ENCODE measurements at regions of chr5 and their contacts with region 1.

Region 1: DNA sequence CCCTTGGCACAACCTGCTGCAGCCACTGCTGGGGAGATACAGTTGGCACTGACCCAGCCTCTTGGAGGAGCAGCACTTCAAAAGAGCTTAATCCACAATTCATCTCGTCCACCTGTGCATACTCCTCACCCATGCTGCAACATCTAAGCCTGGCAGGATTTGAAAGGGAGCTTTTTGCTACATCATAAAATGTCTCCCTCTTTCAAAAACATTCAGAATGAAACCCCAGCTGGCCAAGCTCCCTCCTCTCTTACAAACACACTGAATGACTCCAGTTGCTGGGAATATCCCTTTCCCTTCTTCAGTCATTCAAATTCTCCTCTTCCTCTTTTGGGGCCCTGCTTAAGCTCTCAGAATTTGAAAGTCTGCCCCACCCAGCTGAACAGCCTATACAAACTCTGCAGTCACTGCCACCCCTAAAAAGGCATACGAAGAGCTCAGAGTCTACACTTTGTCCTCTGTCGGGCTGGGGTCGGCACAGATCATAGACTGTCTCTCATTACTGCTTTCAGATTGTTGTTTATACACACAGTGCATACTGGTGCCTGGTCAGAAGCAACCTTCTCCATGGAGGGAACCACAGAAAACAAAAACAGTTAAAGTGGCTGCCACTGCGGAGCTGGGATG is 8.8 kb upstream of the C5orf15 start:
- DNase-seq: no peak
- H3K4me3 ChIP-seq: no peak overlapping the region
- H3K27ac ChIP-seq: peak overlapping the region; percentile 92
- H3K27me3 ChIP-seq: no peaks in the 10 kb centered on the region
- CTCF ChIP-seq: no peak

Region 2: GRCh38 chr5:133831491-133832224 is 145.6 kb before region 1 on chr5:
- CTCF ChIA-PET with region 1: no interaction called
- POLR2A ChIA-PET with region 1: no interaction called
- DNase-seq: no peak
- H3K4me3 ChIP-seq: no peak overlapping the region
- H3K27ac ChIP-seq: no peak overlapping the region
- H3K27me3 ChIP-seq: peaks cover 6% of the 10 kb centered on the region
- CTCF ChIP-seq: no peak

Region 3: GRCh38 chr5:133993231-133993949 is 16.1 kb after region 1 on chr5:
- CTCF ChIA-PET with region 1: interaction called, 38 read pairs
- POLR2A ChIA-PET with region 1: no interaction called
- DNase-seq: no peak
- H3K4me3 ChIP-seq: no peak overlapping the region
- H3K27ac ChIP-seq: no peak overlapping the region
- H3K27me3 ChIP-seq: no peaks in the 10 kb centered on the region
- CTCF ChIP-seq: no peak

Region 4: GRCh38 chr5:134004592-134005375 is 27.5 kb after region 1 on chr5 and contains the start of gene VDAC1:
- CTCF ChIA-PET with region 1: interaction called, 16 read pairs
- POLR2A ChIA-PET with region 1: no interaction called
- DNase-seq: peak; percentile 59
- H3K4me3 ChIP-seq: peak within 1 kb of the TSS; percentile 75
- H3K27ac ChIP-seq: peak within 1 kb of the TSS; percentile 82
- H3K27me3 ChIP-seq: no peaks in the 10 kb centered on the region
- CTCF ChIP-seq: no peak
- polyA plus RNA-seq, gene VDAC1: 218 and 262 TPM in 2 replicates